ENCODE measurements at regions of chr15 and their contacts with region 1.

Region 1: GRCh38 chr15:98954411-98954810 is 53.2 kb downstream of the PGPEP1L start:
- DNase-seq: peak; percentile 96
- H3K4me3 ChIP-seq: no peak overlapping the region
- H3K27ac ChIP-seq: peak overlapping the region; percentile 80 to 92 (median 84)
- H3K4me1 ChIP-seq: peaks cover 0 to 57% (median 49%) of the 10 kb centered on the region in 4 donors
- H3K27me3 ChIP-seq: no peaks in the 10 kb centered on the region
- CTCF ChIP-seq: no peak
- EP300 ChIP-seq: peak in 3 of 4 donors; percentile 62 to 98 (median 68)
- POLR2A ChIP-seq: no peak

Region 2: GRCh38 chr15:98812716-98813441 is 141.5 kb before region 1 on chr15:
- intact Hi-C with region 1: no loop called
- DNase-seq: no peak
- H3K4me3 ChIP-seq: no peak overlapping the region
- H3K27ac ChIP-seq: no peak overlapping the region
- H3K4me1 ChIP-seq: peaks cover 0 to 24% (median 16%) of the 10 kb centered on the region in 4 donors
- H3K27me3 ChIP-seq: no peaks in the 10 kb centered on the region
- CTCF ChIP-seq: no peak
- EP300 ChIP-seq: no peak
- POLR2A ChIP-seq: no peak

Region 3: DNA sequence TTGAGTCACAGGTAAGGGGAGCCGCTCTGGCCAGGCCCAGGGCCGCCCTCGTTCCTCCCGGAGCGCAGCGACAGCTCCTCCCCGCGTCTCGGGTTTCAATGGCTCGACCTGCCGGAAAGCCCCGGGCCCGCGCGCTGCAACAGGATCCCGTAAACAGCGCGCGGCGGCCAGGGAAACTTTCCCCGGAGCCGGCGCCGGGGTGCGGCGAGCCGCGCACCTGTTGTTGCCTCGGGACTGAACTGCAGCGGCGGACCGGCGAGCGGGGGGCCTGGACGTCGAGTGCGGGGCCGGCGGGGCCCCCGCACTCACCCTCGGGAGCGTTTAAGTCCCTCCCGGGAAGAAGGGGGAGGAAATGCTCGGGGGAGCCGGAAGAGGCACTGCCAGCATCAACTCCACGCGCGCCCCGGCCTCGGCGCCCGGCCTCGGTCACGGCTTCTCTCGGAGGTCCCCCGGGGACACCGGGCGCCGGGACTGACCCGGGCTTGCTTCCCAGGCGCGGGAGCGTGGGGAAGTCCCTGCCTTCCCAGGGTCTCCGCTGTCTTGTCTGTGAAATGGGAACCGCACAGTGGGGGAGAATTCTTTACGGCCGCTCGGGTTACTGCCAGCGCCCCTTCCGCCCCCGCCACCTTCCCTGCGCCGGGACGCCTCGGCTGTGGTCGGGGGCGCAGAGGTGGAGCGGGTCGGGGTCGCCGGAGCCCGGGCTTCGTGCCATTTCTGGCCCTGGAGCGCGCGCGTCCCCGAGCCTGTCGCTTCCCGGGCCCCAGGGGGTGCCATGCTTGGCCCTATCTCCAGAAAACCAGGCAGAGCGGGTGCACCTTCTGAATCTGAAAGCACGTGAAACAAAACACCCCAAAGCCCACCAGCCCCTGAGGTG is 60.6 kb after region 1 on chr15:
- intact Hi-C with region 1: loop called (anchors 5 kb)
- DNase-seq: peak; percentile 80
- H3K4me3 ChIP-seq: peak overlapping the region; percentile 32 to 70 (median 59)
- H3K27ac ChIP-seq: peak overlapping the region; percentile 31 to 71 (median 53)
- H3K4me1 ChIP-seq: peaks cover 0 to 11% (median 10%) of the 10 kb centered on the region in 4 donors
- H3K27me3 ChIP-seq: no peaks in the 10 kb centered on the region
- CTCF ChIP-seq: no peak
- EP300 ChIP-seq: no peak
- POLR2A ChIP-seq: no peak

Measured in sigmoid colon (tissue), 7 donors.